AG04450 (cell line): ENCODE measurements at regions of chr2 and their contacts with region 1.

Region 1: GRCh38 chr2:161166538-161167409 is 6.5 kb downstream of the TANK start:
- DNase-seq: no peak
- H3K4me3 ChIP-seq: no peak overlapping the region
- H3K27ac ChIP-seq: no peak overlapping the region
- H3K27me3 ChIP-seq: no peaks in the 10 kb centered on the region
- CTCF ChIP-seq: no peak

Region 2: DNA sequence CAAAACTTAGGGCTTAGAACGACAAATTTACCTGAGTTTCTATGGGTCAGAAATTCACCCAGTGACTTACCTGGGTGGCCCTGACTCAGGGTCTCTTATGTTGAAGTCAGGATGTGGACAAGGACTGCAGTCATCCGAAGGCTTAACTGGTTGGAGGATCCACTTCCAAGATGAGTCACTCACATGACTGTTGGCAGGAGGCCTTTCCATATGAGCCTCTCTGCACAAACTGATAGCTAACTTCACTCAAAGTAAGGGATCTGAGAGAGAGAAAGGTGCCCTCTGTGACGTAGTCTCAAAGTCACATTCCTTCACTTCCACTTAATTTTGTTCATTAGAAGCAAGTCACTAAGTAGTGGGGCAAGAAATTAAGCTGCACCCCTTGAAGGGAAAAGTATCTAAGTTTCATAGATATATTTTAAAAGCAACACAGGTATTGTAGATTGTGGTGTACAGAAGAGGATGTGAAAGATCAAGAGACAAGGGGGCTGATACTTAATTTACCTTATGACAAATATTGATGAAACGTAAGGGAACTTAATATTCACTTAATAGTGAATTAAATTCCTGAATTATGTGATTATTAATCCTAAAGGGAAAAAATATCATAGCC is 41.9 kb after region 1 on chr2:
- CTCF ChIA-PET with region 1: interaction called, 10 read pairs
- POLR2A ChIA-PET with region 1: no interaction called
- DNase-seq: peak; percentile 38
- H3K4me3 ChIP-seq: no peak overlapping the region
- H3K27ac ChIP-seq: no peak overlapping the region
- H3K27me3 ChIP-seq: no peaks in the 10 kb centered on the region
- CTCF ChIP-seq: no peak